ENCODE measurements at regions of chr5 and their contacts with region 1.

Region 1: DNA sequence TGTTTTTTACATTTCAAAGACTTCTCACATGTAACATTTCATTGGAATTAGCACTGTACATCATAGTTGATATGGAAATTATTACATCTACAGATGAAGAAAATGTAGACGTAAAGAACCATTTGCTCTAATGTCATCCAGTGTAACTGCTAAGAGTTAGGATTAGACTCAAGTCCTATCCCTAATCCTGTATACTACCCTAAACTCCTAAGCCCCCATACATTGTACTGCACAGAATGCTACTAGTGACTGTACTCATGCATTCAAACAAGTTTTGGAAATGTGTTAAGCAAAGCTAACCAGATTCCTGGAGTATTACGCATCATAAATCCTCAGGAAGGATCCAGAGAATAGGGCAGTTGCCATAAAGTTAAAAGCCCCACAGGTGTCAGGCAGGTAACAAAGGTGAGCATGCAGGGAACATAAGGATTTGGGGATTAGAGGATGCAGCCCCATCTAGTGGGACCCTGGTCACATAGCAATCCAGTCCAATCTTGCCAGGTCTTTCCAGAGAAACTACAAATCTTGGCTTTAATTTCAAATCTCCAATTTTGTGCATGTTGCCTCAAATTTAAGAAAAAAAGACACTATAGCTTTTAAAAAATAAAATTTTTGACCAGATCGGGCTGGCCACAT is 32.0 kb downstream of the HAVCR1 start:
- DNase-seq: peak; percentile 12
- H3K4me3 Mint-ChIP-seq: no peak overlapping the region
- H3K27ac Mint-ChIP-seq: no peak overlapping the region
- H3K4me1 Mint-ChIP-seq: peaks cover 36% of the 10 kb centered on the region
- H3K27me3 Mint-ChIP-seq: no peaks in the 10 kb centered on the region

Region 2: GRCh38 chr5:156934450-156935211 is 92.3 kb before region 1 on chr5:
- CTCF ChIA-PET with region 1: interaction called, 3 read pairs
- POLR2A ChIA-PET with region 1: no interaction called
- intact Hi-C with region 1: loop called (anchors 2 kb)
- DNase-seq: peak; percentile 77
- H3K4me3 Mint-ChIP-seq: peak overlapping the region; percentile 8
- H3K27ac Mint-ChIP-seq: peak overlapping the region; percentile 76
- H3K4me1 Mint-ChIP-seq: peaks cover 32% of the 10 kb centered on the region
- H3K27me3 Mint-ChIP-seq: no peaks in the 10 kb centered on the region

Region 3: DNA sequence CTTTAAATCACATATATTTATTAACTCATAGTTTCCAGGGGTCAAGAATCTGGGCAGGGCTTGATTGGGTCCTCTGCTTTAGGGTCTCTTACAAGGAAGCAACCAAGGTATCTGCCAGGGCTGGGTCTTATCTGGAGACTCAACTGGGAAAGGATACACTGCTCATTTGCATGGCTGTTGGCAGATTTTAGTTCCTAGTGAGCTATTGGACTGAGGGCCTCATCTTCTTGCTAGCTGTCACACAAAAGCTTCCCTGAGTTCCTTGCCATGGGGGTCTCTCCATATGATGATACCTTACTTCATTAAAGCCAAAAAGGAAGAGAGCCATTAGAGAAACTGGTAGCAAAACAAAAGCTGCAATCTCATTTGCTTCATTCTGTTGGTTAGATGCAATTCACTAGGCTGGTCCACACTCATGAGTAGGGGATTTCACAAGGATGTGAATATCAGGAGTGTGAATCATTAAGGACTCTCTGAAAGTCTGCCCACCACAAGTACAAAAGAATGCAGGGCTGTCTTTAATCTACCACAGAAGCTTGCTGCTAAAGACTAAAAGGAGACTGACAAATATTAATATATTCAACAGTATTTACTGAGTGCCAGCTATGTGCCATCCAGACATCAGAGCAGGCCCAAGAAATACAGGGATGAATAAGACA is 21.9 kb before region 1 on chr5:
- CTCF ChIA-PET with region 1: interaction called, 3 read pairs
- POLR2A ChIA-PET with region 1: no interaction called
- intact Hi-C with region 1: loop called (anchors 1 kb)
- DNase-seq: no peak
- H3K4me3 Mint-ChIP-seq: no peak overlapping the region
- H3K27ac Mint-ChIP-seq: no peak overlapping the region
- H3K4me1 Mint-ChIP-seq: peaks cover 12% of the 10 kb centered on the region
- H3K27me3 Mint-ChIP-seq: no peaks in the 10 kb centered on the region

Region 4: DNA sequence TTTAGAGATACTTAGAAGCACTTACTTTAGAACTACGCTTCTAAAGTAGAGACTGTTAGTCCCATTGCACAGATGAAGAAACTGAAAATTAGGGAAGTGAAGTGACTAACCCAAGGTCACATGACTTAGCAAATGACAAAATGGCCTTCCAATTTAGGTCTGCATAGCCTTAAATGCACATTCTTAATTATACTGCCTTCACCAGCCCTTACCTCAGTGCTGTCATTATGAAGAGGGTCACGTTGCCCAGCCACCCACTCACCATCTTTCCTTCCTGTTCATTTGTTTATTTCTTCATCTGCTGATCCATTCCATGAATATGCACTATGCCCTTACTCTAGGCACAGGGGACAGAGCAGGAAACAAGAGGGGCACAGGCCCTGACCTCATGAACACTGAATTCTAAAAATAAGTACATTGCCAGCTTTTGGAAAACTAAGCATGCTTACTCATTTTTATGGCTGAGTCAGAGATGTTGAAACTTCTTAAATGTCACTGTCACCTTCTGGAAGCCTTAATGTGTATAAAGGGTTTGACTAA is 73.3 kb after region 1 on chr5:
- CTCF ChIA-PET with region 1: no interaction called
- POLR2A ChIA-PET with region 1: interaction called, 3 read pairs
- intact Hi-C with region 1: loop called (anchors 2 kb)
- DNase-seq: peak; percentile 69
- H3K4me3 Mint-ChIP-seq: peak overlapping the region; percentile 27
- H3K27ac Mint-ChIP-seq: peak overlapping the region; percentile 96
- H3K4me1 Mint-ChIP-seq: peaks cover 20% of the 10 kb centered on the region
- H3K27me3 Mint-ChIP-seq: no peaks in the 10 kb centered on the region

Region 5: GRCh38 chr5:157204765-157205164 is 177.9 kb after region 1 on chr5:
- CTCF ChIA-PET with region 1: no interaction called
- POLR2A ChIA-PET with region 1: no interaction called
- intact Hi-C with region 1: no loop called
- DNase-seq: no peak
- H3K4me3 Mint-ChIP-seq: peak overlapping the region; percentile 43
- H3K27ac Mint-ChIP-seq: peak overlapping the region; percentile 95
- H3K4me1 Mint-ChIP-seq: peaks cover 88% of the 10 kb centered on the region
- H3K27me3 Mint-ChIP-seq: no peaks in the 10 kb centered on the region

Region 6: GRCh38 chr5:157214861-157215513 is 188.1 kb after region 1 on chr5:
- CTCF ChIA-PET with region 1: no interaction called
- POLR2A ChIA-PET with region 1: no interaction called
- intact Hi-C with region 1: no loop called
- DNase-seq: no peak
- H3K4me3 Mint-ChIP-seq: peak overlapping the region; percentile 64
- H3K27ac Mint-ChIP-seq: peak overlapping the region; percentile 98
- H3K4me1 Mint-ChIP-seq: peaks cover 95% of the 10 kb centered on the region
- H3K27me3 Mint-ChIP-seq: no peaks in the 10 kb centered on the region

Region 7: DNA sequence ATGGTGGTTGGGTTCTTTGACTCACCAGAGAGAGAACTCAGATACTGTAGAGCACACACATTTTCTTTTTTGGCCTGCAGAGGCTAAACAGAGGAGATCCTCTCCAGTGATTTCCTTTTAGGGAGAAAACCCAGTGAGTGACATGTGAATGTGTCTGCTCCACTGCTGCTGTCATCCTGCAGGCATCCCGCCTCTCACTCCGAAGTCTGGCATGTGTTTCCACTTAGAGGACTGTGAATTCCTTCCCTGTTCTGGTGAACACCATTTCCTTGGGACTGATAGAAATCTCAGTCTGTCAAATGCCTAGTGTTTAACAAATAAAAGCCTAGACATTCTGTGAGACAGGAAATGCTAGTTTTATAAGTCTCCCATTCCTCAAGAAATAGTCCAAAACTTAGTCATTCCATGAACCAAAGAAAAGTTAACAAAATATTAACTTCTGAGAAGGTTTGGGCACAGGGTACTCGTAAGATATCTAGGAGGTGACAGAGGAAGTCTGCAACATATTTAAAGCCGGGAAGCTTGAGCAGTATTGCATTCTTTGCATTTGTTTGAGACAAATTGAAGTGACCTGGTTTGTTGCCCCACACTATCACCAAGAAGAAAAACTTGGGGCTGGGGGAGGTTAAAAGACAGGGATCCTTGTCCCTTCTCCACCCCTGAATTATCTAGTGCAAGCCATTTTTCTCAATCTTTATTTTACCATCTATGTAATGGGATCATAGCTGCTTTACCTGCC is 358.2 kb after region 1 on chr5:
- CTCF ChIA-PET with region 1: no interaction called
- POLR2A ChIA-PET with region 1: no interaction called
- intact Hi-C with region 1: no loop called
- DNase-seq: no peak
- H3K4me3 Mint-ChIP-seq: no peak overlapping the region
- H3K27ac Mint-ChIP-seq: peak overlapping the region; percentile 43
- H3K4me1 Mint-ChIP-seq: peaks cover 26% of the 10 kb centered on the region
- H3K27me3 Mint-ChIP-seq: no peaks in the 10 kb centered on the region

Region 8: DNA sequence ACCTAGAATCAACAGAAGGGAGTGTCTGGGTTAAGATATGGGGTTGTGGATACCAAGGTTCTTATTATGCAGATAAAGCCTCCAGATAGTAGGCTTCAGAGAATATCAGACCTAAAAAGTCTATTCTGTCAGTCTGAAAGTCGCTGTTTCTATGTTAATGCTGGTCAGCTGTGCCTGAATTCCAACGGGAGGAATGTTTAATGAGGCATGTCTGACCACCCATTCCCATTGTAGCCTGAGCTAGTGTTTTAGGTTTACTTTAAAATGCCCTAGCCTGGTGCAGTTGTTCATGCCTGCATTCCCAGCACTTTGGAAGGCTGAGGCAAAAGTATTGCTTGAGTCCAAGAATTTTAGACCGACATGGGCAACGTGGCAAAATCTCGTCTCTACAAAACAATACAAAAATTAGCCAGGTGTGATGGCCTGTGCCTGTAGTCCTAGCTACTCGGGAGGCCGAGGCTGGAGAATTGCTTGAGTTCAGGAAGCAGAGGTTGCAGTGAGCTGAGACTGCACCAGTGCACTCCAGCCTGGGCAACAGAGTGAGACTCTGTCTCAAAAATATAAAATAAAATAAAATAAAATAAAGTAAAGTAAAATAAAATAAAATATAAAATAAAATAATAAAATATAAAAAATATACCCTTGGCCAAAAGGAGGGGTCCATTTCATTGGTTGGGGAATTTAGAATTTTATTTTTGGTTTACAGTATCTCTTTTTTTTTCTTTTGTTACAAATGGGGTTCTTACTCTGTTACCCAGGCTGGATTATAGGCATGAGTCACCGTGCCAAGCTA is 633.2 kb after region 1 on chr5:
- CTCF ChIA-PET with region 1: no interaction called
- POLR2A ChIA-PET with region 1: no interaction called
- intact Hi-C with region 1: no loop called
- DNase-seq: no peak
- H3K4me3 Mint-ChIP-seq: no peak overlapping the region
- H3K27ac Mint-ChIP-seq: no peak overlapping the region
- H3K4me1 Mint-ChIP-seq: no peaks in the 10 kb centered on the region
- H3K27me3 Mint-ChIP-seq: no peaks in the 10 kb centered on the region